ENCODE measurements at regions of chr5 and their contacts with region 1.

Region 1: DNA sequence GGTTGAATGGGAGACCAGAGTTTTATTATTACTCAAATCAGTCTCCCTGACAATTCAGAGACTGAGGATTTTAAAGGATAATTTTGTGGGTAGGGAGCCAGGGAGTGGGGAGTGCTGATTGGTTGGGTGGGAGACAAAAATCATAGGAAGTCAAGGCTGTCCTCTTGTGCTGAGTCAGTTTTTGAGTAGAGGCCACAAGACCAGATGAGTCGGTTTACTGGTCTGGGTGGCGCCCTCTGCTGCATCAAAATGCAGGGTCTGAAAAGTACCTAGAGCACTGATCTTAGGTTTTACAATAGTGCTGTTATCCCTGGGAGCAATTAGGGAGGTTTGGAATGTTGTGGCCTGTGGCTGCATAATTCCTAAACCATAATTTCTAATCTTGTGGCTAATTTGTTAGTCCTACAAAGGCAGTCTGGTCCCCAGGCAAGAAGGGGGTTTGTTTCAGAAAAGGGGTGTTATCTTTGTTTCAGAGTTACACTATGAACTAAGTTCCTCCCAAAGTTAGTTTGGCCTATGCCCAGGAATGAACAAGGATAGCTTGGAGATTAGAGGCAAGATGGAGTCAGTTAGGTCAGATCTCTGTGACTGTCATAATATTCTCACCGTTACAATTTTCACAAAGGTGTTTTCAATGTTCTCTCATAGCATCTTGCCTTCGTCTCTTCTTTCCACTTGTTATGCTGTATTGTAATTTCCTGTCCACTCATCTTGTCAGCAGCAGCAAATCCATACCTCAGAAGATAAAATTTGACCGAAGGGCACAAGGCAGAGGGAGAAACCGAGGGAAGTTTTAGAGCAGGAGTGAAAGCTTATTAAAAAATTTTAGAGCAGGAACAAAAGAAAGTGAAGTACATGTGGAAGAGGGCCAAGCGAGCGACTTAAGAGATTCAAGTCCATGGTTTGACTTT is 59.2 kb upstream of the CLINT1 start:
- DNase-seq: peak; percentile 51 to 73 (median 58)
- ATAC-seq: peak in 2 of 4 donors; percentile 36 to 55
- H3K4me3 ChIP-seq: no peak overlapping the region
- H3K27ac ChIP-seq: peak overlapping the region in 1 of 12 donors; percentile 24
- H3K4me1 ChIP-seq: peaks cover 0 to 47% (median 29%) of the 10 kb centered on the region in 12 donors
- H3K27me3 ChIP-seq: no peaks in the 10 kb centered on the region
- CTCF ChIP-seq: peak; percentile 9 to 61 (median 44)
- POLR2A ChIP-seq: no peak

Region 2: DNA sequence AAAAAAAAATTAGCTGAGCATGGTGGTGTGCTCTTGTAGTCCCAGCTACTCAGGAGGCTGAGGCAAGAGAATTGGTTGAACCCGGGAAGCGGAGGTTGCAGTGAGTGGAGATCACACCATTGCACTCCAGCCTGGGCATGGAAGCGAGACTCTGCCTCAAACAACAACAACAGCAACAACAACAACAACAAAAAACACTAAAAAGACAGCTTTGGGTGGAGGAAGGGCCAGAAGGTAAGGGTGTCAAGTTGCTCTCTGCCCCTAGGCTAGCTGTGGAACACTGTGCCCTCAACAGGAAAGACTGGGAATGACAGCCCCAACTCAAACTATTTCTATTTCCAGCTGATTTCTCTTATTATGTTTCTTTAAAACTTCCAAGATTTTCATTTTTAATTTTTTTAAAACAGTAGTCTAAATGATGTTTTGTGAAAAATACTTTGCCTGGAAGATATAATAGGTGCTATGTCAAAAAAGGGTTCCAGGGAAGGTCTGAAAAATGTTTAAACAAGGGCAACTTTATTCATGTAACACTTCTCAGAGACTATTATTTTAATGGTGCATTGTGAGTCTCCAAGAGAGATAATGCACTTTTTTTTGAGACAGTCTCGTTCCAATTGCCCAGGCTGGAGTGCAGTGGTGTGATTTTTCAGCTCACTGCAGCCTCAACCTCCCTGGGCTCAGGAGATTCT is 89.1 kb before region 1 on chr5:
- intact Hi-C with region 1: loop called in 3 of 10 experiments (anchors 5 to 10 kb)
- DNase-seq: no peak
- ATAC-seq: no peak
- H3K4me3 ChIP-seq: no peak overlapping the region
- H3K27ac ChIP-seq: peak overlapping the region in 4 of 12 donors; percentile 22 to 76 (median 34)
- H3K4me1 ChIP-seq: peaks cover 0 to 52% (median 39%) of the 10 kb centered on the region in 12 donors
- H3K27me3 ChIP-seq: no peaks in the 10 kb centered on the region
- CTCF ChIP-seq: peak in 6 of 12 donors; percentile 8 to 30 (median 22)
- POLR2A ChIP-seq: no peak

Region 3: GRCh38 chr5:157842787-157843186 is 75.4 kb before region 1 on chr5:
- intact Hi-C with region 1: no loop called
- DNase-seq: no peak
- ATAC-seq: no peak
- H3K4me3 ChIP-seq: no peak overlapping the region
- H3K27ac ChIP-seq: no peak overlapping the region
- H3K4me1 ChIP-seq: peaks cover 0 to 4% (median 0%) of the 10 kb centered on the region in 12 donors
- H3K27me3 ChIP-seq: no peaks in the 10 kb centered on the region
- CTCF ChIP-seq: no peak
- POLR2A ChIP-seq: no peak

Region 4: GRCh38 chr5:157858527-157859226 is 59.5 kb before region 1 on chr5 and contains the start of gene CLINT1:
- intact Hi-C with region 1: loop called in 8 of 10 experiments (anchors 2 to 10 kb)
- DNase-seq: peak; percentile 93 to 97 (median 94)
- ATAC-seq: peak; percentile 93 to 99 (median 99)
- H3K4me3 ChIP-seq: peak within 1 kb of the TSS; percentile 67 to 98 (median 88)
- H3K27ac ChIP-seq: peak within 1 kb of the TSS; percentile 35 to 93 (median 90)
- H3K4me1 ChIP-seq: peaks cover 0 to 47% (median 26%) of the 10 kb centered on the region in 12 donors
- H3K27me3 ChIP-seq: no peaks in the 10 kb centered on the region
- CTCF ChIP-seq: peak in 1 of 12 donors; percentile 12
- POLR2A ChIP-seq: peak in 1 of 2 donors; percentile 82
- total RNA-seq, gene CLINT1: 40.1 to 84.8 (median 51.2) TPM

Measured in heart left ventricle (tissue), 16 donors.